Caco-2 (cell line): ENCODE measurements at regions of chr5 and their contacts with region 1.

Region 1: DNA sequence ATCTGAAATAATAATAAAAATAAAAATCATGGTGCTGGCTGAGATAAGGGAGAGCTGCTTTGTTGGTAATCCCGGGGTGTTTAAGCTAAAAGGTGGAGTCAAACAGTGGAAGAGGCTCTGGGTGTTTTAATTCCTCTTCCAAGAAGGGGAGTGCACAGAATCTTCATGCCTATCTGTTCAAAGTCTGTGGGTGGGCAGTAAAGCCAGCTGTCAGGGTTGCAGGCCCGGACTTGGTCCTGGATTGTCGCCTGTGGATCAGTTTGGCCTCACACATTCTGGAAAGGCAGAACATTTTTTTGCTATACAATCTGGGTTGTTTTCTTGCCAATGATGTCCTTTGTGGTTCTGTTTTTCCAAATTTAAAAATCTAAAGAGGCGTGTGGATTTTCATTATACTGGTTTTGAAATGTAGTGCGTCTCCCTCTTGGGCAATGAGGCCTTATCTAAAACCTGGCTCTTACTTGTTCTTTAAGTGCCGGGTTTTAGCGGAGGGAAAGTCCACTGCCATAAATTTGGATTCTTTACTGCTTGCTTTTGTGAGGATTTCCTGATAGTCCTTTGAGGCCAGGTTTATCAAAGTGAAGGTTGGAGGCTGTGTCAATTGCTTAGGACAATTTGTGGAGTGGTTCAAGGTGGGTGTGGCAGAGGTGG is 5.8 kb downstream of the ANKDD1B start:
- DNase-seq: peak; percentile 60 to 72
- H3K4me3 ChIP-seq: no peak overlapping the region
- H3K4me3 Mint-ChIP-seq: peak overlapping the region; percentile 58
- H3K27ac Mint-ChIP-seq: no peak overlapping the region
- H3K4me1 ChIP-seq: peaks cover 98% of the 10 kb centered on the region
- H3K4me1 Mint-ChIP-seq: peaks cover 43% of the 10 kb centered on the region
- H3K27me3 ChIP-seq: no peaks in the 10 kb centered on the region
- H3K27me3 Mint-ChIP-seq: no peaks in the 10 kb centered on the region
- CTCF ChIP-seq: no peak

Region 2: DNA sequence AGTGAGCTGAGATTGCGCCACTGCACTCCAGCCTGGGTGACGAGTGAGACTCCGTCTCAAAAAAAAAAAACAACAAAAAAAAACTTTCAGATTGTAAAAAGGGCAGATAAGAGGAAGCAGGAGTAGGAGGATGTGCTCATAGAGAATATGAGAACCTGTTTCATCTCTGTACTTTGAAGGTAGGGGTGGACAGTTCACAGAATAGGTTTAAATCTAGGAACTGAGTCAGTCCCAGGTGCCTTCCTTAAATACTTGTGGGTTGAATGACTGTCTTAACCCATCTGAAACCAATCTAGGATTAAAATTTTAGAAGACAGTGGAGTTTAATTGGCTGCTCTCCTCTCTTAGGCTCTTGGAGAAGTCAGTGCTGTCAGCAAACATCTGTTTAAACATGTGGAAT is 93.0 kb before region 1 on chr5:
- CTCF ChIA-PET with region 1: no interaction called
- POLR2A ChIA-PET with region 1: no interaction called
- intact Hi-C with region 1: loop called (anchors 5 kb)
- DNase-seq: no peak
- H3K4me3 ChIP-seq: no peak overlapping the region
- H3K4me3 Mint-ChIP-seq: peak overlapping the region; percentile 55
- H3K27ac Mint-ChIP-seq: peak overlapping the region; percentile 77
- H3K4me1 ChIP-seq: peaks cover 20% of the 10 kb centered on the region
- H3K4me1 Mint-ChIP-seq: peaks cover 22% of the 10 kb centered on the region
- H3K27me3 ChIP-seq: no peaks in the 10 kb centered on the region
- H3K27me3 Mint-ChIP-seq: no peaks in the 10 kb centered on the region
- CTCF ChIP-seq: no peak